ENCODE measurements at regions of chr4 and their contacts with region 1.

Region 1: DNA sequence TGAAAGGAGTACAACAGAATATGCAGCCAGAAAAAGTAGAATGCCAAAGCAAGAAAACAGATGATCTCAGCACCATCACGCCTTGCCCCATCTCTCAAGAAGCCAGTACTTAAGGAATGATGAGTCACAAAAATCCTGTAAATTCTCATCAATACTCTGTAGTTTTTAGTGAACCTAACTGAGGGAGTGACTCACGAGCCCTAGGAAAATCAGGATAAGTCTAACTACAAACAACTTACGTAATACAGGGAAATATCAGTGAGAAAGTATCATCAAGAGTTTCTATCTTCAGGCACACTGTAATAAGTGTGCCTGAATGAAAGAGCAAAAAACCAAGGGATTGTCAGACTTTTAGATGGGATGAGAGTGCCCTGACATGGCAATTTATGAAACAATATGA is 644.4 kb downstream of the STPG2 start:
- DNase-seq: peak; percentile 92
- ATAC-seq: peak; percentile 80
- H3K4me3 ChIP-seq: no peak overlapping the region
- H3K27ac ChIP-seq: peak overlapping the region; percentile 78
- H3K4me1 ChIP-seq: peaks cover 42% of the 10 kb centered on the region
- H3K27me3 ChIP-seq: no peaks in the 10 kb centered on the region
- CTCF ChIP-seq: no peak

Region 2: GRCh38 chr4:96753216-96753615 is 745.7 kb before region 1 on chr4:
- CTCF ChIA-PET with region 1: no interaction called
- POLR2A ChIA-PET with region 1: no interaction called
- intact Hi-C with region 1: no loop called
- DNase-seq: no peak
- ATAC-seq: no peak
- H3K4me3 ChIP-seq: no peak overlapping the region
- H3K27ac ChIP-seq: no peak overlapping the region
- H3K4me1 ChIP-seq: no peaks in the 10 kb centered on the region
- H3K27me3 ChIP-seq: no peaks in the 10 kb centered on the region
- CTCF ChIP-seq: no peak

Region 3: GRCh38 chr4:97394653-97395052 is 104.2 kb before region 1 on chr4:
- CTCF ChIA-PET with region 1: no interaction called
- POLR2A ChIA-PET with region 1: no interaction called
- intact Hi-C with region 1: loop called (anchors 10 kb)
- DNase-seq: peak; percentile 94
- ATAC-seq: peak; percentile 81
- H3K4me3 ChIP-seq: no peak overlapping the region
- H3K27ac ChIP-seq: peak overlapping the region; percentile 19; the same call in 1 of the 2 replicates
- H3K4me1 ChIP-seq: peaks cover 13% of the 10 kb centered on the region
- H3K27me3 ChIP-seq: no peaks in the 10 kb centered on the region
- CTCF ChIP-seq: no peak

Region 4: DNA sequence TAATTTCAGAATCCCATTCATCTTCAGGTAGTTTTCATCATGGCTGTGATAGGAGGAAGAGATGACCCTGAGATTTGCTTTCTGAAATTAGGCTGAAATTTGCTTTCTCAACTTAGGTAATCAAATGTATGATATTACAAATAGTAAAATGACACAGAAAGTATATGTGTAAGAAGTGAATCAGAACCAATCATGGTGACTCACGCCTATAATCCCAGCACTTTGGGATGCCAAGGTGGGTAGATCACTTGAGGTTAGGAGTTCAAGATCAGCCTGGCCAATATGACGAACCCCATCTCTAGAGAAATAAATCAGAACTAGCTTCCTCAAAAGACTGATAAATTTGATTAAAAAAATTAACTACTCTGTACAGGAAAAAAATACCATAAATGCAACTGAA is 89.0 kb after region 1 on chr4:
- CTCF ChIA-PET with region 1: no interaction called
- POLR2A ChIA-PET with region 1: no interaction called
- intact Hi-C with region 1: loop called (anchors 5 kb)
- DNase-seq: peak; percentile 85
- ATAC-seq: peak; percentile 44
- H3K4me3 ChIP-seq: no peak overlapping the region
- H3K27ac ChIP-seq: peak overlapping the region; percentile 85
- H3K4me1 ChIP-seq: peaks cover 37% of the 10 kb centered on the region
- H3K27me3 ChIP-seq: no peaks in the 10 kb centered on the region
- CTCF ChIP-seq: no peak

Region 5: GRCh38 chr4:97720869-97721432 is 222.1 kb after region 1 on chr4:
- CTCF ChIA-PET with region 1: no interaction called
- POLR2A ChIA-PET with region 1: no interaction called
- intact Hi-C with region 1: loop called (anchors 5 kb)
- DNase-seq: peak; percentile 65
- ATAC-seq: peak; percentile 76
- H3K4me3 ChIP-seq: no peak overlapping the region
- H3K27ac ChIP-seq: no peak overlapping the region
- H3K4me1 ChIP-seq: 0 out of 2 replicates have a peak, but pooled peaks cover 3% of the 10 kb centered on the region
- H3K27me3 ChIP-seq: no peaks in the 10 kb centered on the region
- CTCF ChIP-seq: peak; percentile 64